ENCODE measurements at regions of chr4 and their contacts with region 1.

Region 1: GRCh38 chr4:41281038-41281634 is 24.4 kb downstream of the UCHL1 start:
- DNase-seq: no peak
- ATAC-seq: peak; percentile 91

Region 2: GRCh38 chr4:40395908-40396793 is 885.0 kb before region 1 on chr4:
- intact Hi-C with region 1: no loop called
- DNase-seq: peak; percentile 48 to 79
- ATAC-seq: peak; percentile 75

Region 3: GRCh38 chr4:41644288-41644914 is 363.3 kb after region 1 on chr4:
- intact Hi-C with region 1: loop called in 1 of 2 experiments (anchors 5 kb)
- DNase-seq: peak; percentile 46 to 82
- ATAC-seq: peak; percentile 95

Region 4: DNA sequence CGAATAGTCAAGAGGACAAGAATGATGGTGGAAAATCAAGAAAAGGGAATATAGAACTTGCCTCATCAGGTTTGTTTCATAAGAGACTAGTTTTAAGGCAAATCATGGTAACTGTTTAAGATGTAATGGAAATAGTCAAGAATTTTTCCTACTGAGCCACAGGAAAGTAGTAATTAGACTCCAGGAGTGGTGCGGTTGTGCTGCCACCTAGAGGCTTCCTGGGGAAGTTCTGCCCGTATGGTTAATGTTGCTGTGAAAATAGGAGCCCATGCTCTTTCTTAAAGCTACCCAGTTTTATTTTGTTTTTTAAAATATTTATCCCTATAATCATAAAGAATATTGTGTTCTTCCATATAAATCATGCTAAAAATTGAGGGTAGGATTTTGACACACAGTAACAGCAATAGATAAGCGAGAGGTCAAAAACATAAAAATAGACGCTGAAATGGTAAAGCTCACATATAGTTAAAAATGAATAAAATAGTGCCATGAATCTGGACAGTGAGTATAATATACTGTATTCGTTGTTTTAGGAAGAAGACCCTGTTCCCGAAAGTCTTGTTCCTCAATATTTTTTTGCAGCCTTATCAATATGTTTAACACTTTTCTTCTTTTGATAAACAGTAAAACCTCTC is 380.4 kb after region 1 on chr4:
- intact Hi-C with region 1: loop called (anchors 5 to 10 kb)
- DNase-seq: peak in 1 of 2 donors; percentile 51
- ATAC-seq: peak; percentile 64

Region 5: DNA sequence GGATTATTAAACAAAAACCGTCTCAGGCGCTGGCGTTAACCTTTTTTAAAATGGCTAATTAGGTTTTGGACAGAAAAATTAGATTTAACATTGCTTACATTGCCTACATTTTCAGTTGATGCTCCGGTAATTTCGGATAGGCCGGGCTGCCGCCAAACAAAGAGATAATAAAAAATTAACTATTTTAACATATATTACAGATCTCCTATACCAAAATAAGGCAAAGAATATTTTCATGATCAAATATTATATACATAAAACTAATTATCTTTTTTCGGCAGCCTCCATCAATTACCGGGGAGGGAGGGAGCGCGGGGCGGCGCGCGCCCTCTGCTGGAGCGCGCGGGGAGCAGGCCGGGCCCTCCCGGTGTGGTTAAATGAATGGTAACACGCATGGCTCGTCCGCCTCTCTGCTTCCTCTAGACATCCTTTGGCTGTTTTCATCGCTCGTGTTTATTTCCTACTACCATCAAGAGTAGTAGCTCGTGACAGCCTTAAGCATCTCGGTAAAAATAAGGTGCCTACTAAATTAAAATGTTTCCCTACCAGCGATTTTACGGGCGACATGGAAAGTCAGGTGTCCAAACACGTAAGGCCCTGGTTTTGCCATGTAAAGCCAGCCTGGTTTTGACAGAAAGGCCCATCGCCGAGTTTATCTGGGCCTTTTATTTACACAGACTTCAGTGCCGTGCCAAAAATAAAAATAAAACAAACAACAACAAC is 601.6 kb after region 1 on chr4:
- intact Hi-C with region 1: loop called in 1 of 2 experiments (anchors 10 kb)
- DNase-seq: peak in 1 of 2 donors; percentile 40
- ATAC-seq: peak; percentile 82

Measured in left colon (tissue), 2 donors.